HCT116 (cell line): ENCODE measurements at regions of chr9 and their contacts with region 1.

Region 1: DNA sequence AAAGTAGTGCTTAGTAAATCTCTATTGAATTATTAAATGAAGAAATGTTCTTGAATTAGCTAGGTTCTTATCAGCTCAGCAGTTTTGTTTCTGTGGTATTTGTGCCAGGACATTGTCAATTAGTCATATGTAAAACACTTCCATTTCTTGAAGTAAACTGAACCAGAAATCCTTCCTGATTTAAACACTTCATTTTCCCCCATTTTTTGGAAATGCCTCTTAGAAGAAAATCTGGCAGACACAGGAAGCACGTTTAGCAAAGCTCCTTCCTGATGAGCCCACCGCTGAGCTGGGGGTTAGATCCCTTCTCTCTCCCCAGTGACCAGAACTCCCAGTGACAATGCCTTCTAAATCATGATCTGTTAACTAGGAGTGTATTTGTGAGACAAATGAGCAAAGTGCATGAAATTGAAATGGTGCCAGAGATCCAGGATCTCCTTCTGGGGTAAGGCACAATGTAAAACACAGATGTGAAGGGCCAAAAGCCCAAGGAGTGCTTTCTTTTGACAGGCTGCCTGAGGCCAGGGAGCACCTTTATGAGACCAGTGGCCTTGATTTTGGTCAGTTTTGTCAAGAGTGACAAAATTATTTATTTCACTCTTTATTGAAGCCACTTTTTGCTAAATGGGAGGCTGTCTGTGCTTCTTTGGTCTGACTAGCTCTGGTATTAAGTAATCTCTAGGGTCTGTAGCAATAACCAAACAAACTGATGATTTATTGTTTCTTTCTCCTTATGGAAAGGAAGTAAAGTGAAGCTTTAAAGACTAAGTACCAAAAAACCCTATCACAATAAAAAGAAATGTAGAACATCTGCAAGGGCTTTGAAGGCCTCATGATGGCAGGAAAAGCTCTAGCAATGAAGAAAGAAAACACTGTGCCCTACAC is 25.5 kb upstream of the RUSC2 start:
- DNase-seq: no peak
- ATAC-seq: no peak
- H3K4me3 ChIP-seq: no peak overlapping the region
- H3K27ac ChIP-seq: no peak overlapping the region
- H3K4me1 ChIP-seq: no peaks in the 10 kb centered on the region
- H3K27me3 ChIP-seq: no peaks in the 10 kb centered on the region; the same call in 1 of the 2 replicates
- CTCF ChIP-seq: no peak
- POLR2A ChIP-seq: no peak
- RAD21 ChIP-seq: no peak

Region 2: GRCh38 chr9:35258676-35259474 is 205.5 kb before region 1 on chr9:
- CTCF ChIA-PET with region 1: no interaction called
- POLR2A ChIA-PET with region 1: no interaction called
- RAD21 ChIA-PET with region 1: no interaction called
- intact Hi-C with region 1: loop called (anchors 10 kb)
- DNase-seq: peak; percentile 31
- ATAC-seq: peak; percentile 76
- H3K4me3 ChIP-seq: no peak overlapping the region
- H3K27ac ChIP-seq: no peak overlapping the region
- H3K4me1 ChIP-seq: 0 out of 4 replicates have a peak, but pooled peaks cover 0 to 2% of the 10 kb centered on the region in 2 experiments
- H3K27me3 ChIP-seq: no peaks in the 10 kb centered on the region
- CTCF ChIP-seq: peak; percentile 47 to 66 (median 63); a peak in 5 of 6 replicates
- POLR2A ChIP-seq: no peak
- RAD21 ChIP-seq: peak; percentile 63

Region 3: DNA sequence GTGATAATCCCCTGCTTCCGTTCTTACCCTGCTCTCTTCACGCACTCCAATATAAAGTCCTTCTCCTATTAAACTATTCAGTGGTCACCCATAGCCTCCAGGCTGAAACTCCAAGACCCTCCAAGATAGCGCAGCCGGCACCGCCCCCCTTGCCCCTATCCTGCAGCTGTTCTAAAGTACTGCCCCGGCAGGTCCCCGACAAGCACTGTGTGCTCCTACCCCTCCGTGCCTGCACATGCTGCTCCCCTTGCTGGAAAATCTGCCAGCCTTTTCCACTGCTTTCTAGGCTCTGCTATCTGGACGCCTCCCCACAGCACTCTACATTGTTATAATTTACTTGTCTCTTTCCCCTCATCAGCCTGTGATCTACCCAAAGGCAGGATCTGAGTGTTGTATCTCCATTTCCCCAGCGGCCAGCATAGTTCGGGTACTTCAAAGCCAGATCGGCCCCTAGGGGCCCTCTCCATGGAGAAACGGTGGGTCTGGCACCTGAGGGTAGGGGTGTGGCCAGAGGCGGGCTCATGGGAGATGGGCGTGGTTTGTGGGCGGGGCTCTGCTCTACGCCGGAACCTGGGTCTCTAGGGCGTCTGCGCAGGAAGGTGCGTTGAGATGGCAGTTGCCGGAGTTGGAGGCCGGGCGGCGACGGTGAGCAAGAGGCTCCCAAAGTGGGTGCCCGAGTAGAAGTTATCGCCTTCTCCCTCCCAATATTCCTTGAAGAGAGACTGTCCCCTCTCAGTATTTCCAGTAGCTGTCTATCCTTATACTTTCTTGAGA is 58.0 kb before region 1 on chr9:
- CTCF ChIA-PET with region 1: no interaction called
- POLR2A ChIA-PET with region 1: no interaction called
- RAD21 ChIA-PET with region 1: no interaction called
- intact Hi-C with region 1: loop called (anchors 5 kb)
- DNase-seq: no peak
- ATAC-seq: peak; percentile 66; the same call in 1 of the 2 replicates
- H3K4me3 ChIP-seq: no peak overlapping the region
- H3K27ac ChIP-seq: no peak overlapping the region
- H3K4me1 ChIP-seq: no peaks in the 10 kb centered on the region
- H3K27me3 ChIP-seq: no peaks in the 10 kb centered on the region
- CTCF ChIP-seq: no peak
- POLR2A ChIP-seq: no peak
- RAD21 ChIP-seq: no peak

Region 4: DNA sequence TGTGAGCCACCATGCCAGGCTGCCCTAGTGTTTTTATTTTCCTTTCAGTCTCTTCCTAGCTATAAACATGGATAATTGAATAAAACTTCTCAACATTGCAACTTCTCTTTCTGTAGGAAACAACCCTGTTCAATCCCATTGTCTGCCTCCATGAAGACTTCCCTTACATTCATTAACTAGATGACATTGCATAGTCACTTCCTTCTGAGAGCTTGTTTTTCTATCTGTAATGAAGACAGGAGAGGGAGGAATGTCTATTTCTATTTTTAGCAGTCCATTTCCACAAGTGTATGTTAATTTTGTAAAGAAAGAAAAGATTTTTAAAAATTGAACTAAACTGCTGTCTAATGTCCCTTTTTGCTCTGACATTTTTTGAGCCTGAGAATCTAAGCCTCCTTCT is 1052.7 kb after region 1 on chr9:
- CTCF ChIA-PET with region 1: no interaction called
- POLR2A ChIA-PET with region 1: no interaction called
- RAD21 ChIA-PET with region 1: no interaction called
- intact Hi-C with region 1: no loop called
- DNase-seq: no peak
- ATAC-seq: no peak
- H3K4me3 ChIP-seq: no peak overlapping the region
- H3K27ac ChIP-seq: no peak overlapping the region
- H3K4me1 ChIP-seq: no peaks in the 10 kb centered on the region
- H3K27me3 ChIP-seq: no peaks in the 10 kb centered on the region
- CTCF ChIP-seq: no peak
- POLR2A ChIP-seq: no peak
- RAD21 ChIP-seq: no peak

Region 5: GRCh38 chr9:36640771-36641381 is 1176.5 kb after region 1 on chr9:
- CTCF ChIA-PET with region 1: no interaction called
- POLR2A ChIA-PET with region 1: no interaction called
- RAD21 ChIA-PET with region 1: no interaction called
- intact Hi-C with region 1: no loop called
- DNase-seq: no peak
- ATAC-seq: no peak
- H3K4me3 ChIP-seq: no peak overlapping the region
- H3K27ac ChIP-seq: no peak overlapping the region
- H3K4me1 ChIP-seq: no peaks in the 10 kb centered on the region
- H3K27me3 ChIP-seq: no peaks in the 10 kb centered on the region
- CTCF ChIP-seq: no peak
- POLR2A ChIP-seq: no peak
- RAD21 ChIP-seq: no peak